ENCODE measurements at regions of chr15 and their contacts with region 1.

Region 1: GRCh38 chr15:90233376-90234095 is at the start of gene CIB1:
- DNase-seq: peak; percentile 98
- ATAC-seq: peak; percentile 85
- H3K4me3 Mint-ChIP-seq: peak within 1 kb of the TSS; percentile 89
- H3K27ac Mint-ChIP-seq: peak within 1 kb of the TSS; percentile 94
- H3K4me1 Mint-ChIP-seq: peaks cover 57% of the 10 kb centered on the region
- H3K27me3 Mint-ChIP-seq: no peaks in the 10 kb centered on the region
- total RNA-seq, gene CIB1: 120 to 127 TPM

Region 2: DNA sequence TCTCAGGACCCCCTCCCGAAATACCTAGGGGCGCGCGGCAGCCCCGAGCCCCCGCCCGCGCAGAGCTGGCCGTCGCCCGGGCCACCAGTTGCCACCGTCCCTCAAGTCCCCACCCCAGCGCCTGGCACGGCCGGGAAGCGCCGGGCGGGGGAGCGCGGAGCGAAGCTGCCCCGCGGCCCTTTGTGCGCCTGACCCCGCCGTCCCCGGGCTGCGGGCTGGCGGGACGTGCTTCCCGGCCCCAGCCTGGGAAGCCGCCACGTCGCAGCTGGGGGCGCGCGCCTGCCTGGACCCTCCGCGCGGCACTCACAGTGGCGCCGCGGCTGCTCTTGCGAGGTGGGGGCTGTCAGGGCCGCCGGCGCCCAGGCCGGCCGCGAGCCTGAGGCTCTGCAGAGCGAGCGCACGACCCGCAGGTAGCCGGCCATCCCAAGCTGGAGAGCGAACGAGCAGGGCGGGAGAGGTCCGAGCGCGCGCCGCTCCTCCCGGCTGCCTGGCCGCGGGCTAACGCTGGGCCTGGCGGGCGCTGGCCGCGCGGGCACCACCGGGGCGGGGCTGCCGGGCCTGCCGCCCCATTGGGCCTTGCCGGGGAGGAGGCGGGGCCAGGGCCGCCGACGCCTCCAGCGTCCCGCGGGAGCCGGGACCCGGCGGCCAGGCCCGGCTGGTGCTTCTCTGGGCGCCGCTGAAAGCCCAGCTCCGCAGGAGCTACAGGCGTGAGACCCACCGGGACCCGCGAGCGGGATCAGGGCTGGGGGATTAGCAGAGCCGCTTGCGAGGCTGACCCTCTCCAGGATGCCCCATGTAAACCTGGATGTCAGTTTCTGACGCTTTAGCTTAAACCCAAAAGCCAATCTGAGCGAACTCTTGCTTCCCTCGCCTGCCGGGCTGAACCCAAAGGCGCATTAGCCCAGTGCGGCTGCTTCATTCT is 131.3 kb before region 1 on chr15 and contains the start of gene IDH2:
- CTCF ChIA-PET with region 1: interaction called, 16 read pairs
- DNase-seq: peak; percentile 80
- ATAC-seq: peak; percentile 84
- H3K4me3 Mint-ChIP-seq: peak within 1 kb of the TSS; percentile 79
- H3K27ac Mint-ChIP-seq: peak within 1 kb of the TSS; percentile 96
- H3K4me1 Mint-ChIP-seq: peaks cover 47% of the 10 kb centered on the region
- H3K27me3 Mint-ChIP-seq: peaks cover 4% of the 10 kb centered on the region
- total RNA-seq, gene IDH2: 196 to 293 TPM

Region 3: DNA sequence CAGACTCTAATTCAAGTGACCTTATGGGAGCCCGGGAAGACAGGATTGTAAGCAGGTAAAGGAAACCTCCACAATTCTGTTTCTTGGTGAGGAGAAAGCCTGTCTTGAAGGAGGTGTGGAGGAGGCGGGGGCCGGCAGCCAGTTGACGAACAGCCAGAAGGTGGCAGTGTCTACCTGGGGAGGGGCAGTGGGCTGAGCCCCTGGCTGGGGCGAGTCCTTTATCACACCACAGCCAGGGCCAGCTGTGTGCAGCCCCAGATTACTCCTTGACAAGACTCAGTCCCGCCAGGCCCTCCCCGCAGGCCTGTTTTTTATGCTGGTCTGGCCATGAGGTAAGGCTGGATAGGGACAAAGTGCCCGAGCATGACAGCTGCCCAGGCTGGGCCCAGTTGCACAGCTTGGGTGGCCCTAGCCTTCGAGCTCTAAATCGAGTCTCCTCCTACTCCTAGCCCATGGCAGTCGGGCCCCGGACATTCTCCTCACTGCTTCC is 90.3 kb before region 1 on chr15:
- CTCF ChIA-PET with region 1: interaction called, 16 read pairs
- DNase-seq: peak; percentile 84
- ATAC-seq: peak; percentile 88
- H3K4me3 Mint-ChIP-seq: no peak overlapping the region
- H3K27ac Mint-ChIP-seq: peak overlapping the region; percentile 80
- H3K4me1 Mint-ChIP-seq: peaks cover 38% of the 10 kb centered on the region
- H3K27me3 Mint-ChIP-seq: no peaks in the 10 kb centered on the region

Region 4: GRCh38 chr15:90191794-90192509 is 41.6 kb before region 1 on chr15:
- CTCF ChIA-PET with region 1: no interaction called
- DNase-seq: no peak
- ATAC-seq: peak; percentile 43
- H3K4me3 Mint-ChIP-seq: no peak overlapping the region
- H3K27ac Mint-ChIP-seq: no peak overlapping the region
- H3K4me1 Mint-ChIP-seq: peaks cover 28% of the 10 kb centered on the region
- H3K27me3 Mint-ChIP-seq: no peaks in the 10 kb centered on the region

Region 5: DNA sequence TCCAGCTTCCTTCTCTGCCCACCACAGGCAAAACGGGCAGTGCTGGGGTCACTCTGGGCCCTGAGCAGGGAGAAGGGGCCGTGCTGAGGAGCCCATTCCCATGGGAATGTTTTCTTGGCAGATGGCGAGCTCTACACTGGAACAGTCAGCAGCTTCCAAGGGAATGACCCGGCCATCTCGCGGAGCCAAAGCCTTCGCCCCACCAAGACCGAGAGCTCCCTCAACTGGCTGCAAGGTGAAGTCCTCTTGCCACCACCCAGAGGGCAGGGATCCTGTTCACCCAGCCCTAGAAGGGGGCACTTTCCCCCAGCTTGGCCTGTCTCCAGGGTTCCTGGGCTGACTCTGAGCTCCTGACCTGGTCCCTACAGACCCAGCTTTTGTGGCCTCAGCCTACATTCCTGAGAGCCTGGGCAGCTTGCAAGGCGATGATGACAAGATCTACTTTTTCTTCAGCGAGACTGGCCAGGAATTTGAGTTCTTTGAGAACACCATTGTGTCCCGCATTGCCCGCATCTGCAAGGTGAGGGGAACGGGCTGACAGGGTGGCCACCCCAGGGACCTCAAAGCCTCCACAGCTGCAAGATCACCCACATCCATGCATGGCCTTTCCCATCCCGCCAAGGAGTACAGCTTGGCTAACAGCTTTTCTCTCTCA is 12.2 kb before region 1 on chr15:
- CTCF ChIA-PET with region 1: interaction called, 35 read pairs
- DNase-seq: no peak
- ATAC-seq: peak; percentile 25
- H3K4me3 Mint-ChIP-seq: no peak overlapping the region
- H3K27ac Mint-ChIP-seq: no peak overlapping the region
- H3K4me1 Mint-ChIP-seq: peaks cover 17% of the 10 kb centered on the region
- H3K27me3 Mint-ChIP-seq: no peaks in the 10 kb centered on the region

Region 6: DNA sequence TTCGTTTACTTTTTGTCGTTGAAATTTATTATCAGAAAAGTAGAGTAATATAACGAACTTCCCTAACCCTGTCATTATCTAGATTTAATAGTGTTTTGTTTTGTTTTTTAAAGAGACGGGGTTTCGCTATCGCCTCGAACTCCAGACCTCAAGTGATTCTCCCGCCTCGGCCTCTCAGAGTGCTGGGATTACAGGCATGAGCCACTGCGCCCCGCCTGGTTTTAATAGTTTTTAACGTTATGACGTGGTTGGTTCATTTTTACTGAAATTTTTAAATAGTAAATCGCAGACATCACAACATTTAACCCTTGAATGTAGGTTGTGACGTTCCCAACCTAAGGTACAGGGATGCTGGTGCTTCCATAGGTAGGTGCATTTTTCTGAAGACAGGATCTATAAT is 33.0 kb after region 1 on chr15:
- CTCF ChIA-PET with region 1: interaction called, 12 read pairs
- DNase-seq: peak; percentile 60
- ATAC-seq: no peak
- H3K4me3 Mint-ChIP-seq: peak overlapping the region; percentile 94
- H3K27ac Mint-ChIP-seq: peak overlapping the region; percentile 99
- H3K4me1 Mint-ChIP-seq: peaks cover 52% of the 10 kb centered on the region
- H3K27me3 Mint-ChIP-seq: no peaks in the 10 kb centered on the region